ENCODE measurements at regions of chr22 and their contacts with region 1.

Region 1: DNA sequence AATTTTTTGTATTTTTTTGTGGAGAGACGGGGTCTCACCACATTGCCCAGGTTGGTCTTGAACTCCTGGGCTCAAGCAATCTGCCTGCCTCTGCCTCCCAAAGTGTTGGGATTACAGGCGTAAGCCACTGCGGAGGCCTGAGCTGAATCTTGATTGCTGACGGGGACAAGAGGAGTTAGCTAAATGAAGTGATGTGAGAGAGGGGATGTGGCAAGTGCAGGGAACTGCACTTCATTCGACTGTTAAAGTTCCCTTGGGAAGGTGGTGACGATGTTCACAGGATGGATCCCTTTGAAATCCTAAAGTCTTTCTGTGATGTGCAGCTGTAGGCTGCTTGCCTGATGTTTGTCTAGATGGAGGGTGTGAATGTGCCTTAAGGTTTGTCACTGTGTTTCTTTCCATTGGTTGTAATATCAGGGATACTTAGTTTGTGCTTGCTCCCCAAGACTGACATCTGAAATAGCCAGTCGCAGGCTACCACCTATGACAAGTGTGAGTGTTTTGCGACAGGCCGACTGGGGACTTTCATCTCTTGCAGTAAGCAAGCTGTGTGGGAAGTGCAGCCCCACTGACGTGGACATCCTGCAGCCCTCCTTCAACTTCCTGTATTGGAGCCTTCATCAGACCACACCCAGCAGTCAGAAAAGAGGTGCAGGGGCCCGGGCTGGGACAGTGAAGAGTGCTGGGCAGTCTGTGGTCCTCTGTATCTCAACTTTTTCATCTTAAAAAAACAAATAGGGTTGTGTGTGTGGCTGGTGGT is 19.6 kb upstream of the CCDC134 start:
- DNase-seq: peak; percentile 90 to 99 (median 95)
- H3K4me3 ChIP-seq: peak overlapping the region; percentile 88 to 92
- H3K4me3 Mint-ChIP-seq: peak overlapping the region; percentile 88 to 94 (median 90)
- H3K27ac ChIP-seq: peak overlapping the region; percentile 90
- H3K27ac Mint-ChIP-seq: peak overlapping the region; percentile 92 to 100 (median 99)
- H3K4me1 ChIP-seq: peaks cover 50% of the 10 kb centered on the region
- H3K4me1 Mint-ChIP-seq: peaks cover 29 to 53% (median 40%) of the 10 kb centered on the region in 4 donors
- H3K27me3 ChIP-seq: no peaks in the 10 kb centered on the region
- H3K27me3 Mint-ChIP-seq: no peaks in the 10 kb centered on the region

Region 2: GRCh38 chr22:41666661-41667258 is 114.2 kb before region 1 on chr22:
- CTCF ChIA-PET with region 1: interaction called, 12 read pairs
- POLR2A ChIA-PET with region 1: interaction called, 11 read pairs
- intact Hi-C with region 1: no loop called
- DNase-seq: peak; percentile 91 to 97 (median 96)
- H3K4me3 ChIP-seq: peak overlapping the region in 1 of 2 donors; percentile 39
- H3K4me3 Mint-ChIP-seq: peak overlapping the region; percentile 86 to 94 (median 88)
- H3K27ac ChIP-seq: peak overlapping the region; percentile 80
- H3K27ac Mint-ChIP-seq: peak overlapping the region; percentile 97 to 99 (median 98)
- H3K4me1 ChIP-seq: peaks cover 14% of the 10 kb centered on the region
- H3K4me1 Mint-ChIP-seq: peaks cover 4 to 14% (median 11%) of the 10 kb centered on the region in 4 donors
- H3K27me3 ChIP-seq: no peaks in the 10 kb centered on the region
- H3K27me3 Mint-ChIP-seq: no peaks in the 10 kb centered on the region

Region 3: DNA sequence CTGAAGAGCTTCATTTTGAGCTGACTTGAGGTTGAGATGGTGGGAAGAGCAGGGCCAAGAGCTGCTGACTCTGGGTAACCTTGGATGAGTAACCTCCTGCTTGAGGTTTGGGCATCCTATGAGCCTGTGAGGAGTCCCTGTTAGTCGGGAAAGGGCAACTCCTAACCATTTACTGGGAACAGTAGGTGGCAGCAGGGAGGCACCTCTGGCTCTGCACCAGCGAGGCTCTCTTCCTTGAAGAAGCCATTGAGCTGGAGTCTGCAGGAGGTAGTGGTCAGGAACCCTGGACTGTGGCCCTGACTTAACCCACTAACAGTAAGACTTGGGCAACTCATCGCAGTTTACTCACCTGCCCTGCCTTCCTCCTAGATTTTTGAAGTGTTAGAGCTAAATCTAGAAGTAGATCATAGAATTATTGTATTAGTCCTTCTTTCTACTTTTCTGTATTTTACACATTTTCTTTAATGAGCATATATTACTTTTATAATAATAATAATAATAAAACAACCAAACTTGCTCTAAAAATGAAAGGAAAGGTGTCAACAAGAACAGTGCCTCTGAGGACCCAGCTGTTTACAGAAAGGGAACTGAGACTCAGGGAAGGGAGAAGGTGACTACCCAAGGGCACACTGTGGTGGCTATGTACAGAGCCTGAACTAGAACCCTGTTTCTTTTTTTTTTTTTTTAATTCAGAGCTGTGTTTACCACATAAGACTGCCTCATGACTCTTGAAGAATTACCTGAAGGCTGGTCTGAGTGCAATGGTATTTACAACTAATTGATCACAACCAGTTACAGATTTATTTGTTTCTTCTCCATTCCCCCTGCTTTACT is 34.1 kb before region 1 on chr22:
- CTCF ChIA-PET with region 1: interaction called, 46 read pairs
- POLR2A ChIA-PET with region 1: interaction called, 13 read pairs
- intact Hi-C with region 1: loop called (anchors 1 kb)
- DNase-seq: peak; percentile 48 to 66 (median 51)
- H3K4me3 ChIP-seq: no peak overlapping the region
- H3K4me3 Mint-ChIP-seq: no peak overlapping the region
- H3K27ac ChIP-seq: no peak overlapping the region
- H3K27ac Mint-ChIP-seq: peak overlapping the region in 1 of 7 donors; percentile 2
- H3K4me1 ChIP-seq: no peaks in the 10 kb centered on the region
- H3K4me1 Mint-ChIP-seq: peaks cover 0 to 5% (median 1%) of the 10 kb centered on the region in 4 donors
- H3K27me3 ChIP-seq: no peaks in the 10 kb centered on the region
- H3K27me3 Mint-ChIP-seq: peaks cover 0 to 2% of the 10 kb centered on the region in 2 donors

Region 4: GRCh38 chr22:41793871-41794270 is 12.9 kb after region 1 on chr22:
- CTCF ChIA-PET with region 1: interaction called, 71 read pairs
- POLR2A ChIA-PET with region 1: interaction called, 584 read pairs
- intact Hi-C with region 1: no loop called
- DNase-seq: no peak
- H3K4me3 ChIP-seq: no peak overlapping the region
- H3K4me3 Mint-ChIP-seq: no peak overlapping the region
- H3K27ac ChIP-seq: no peak overlapping the region
- H3K27ac Mint-ChIP-seq: peak overlapping the region in 2 of 7 donors; percentile 30 to 80
- H3K4me1 ChIP-seq: peaks cover 4% of the 10 kb centered on the region
- H3K4me1 Mint-ChIP-seq: peaks cover 7 to 13% (median 10%) of the 10 kb centered on the region in 4 donors
- H3K27me3 ChIP-seq: no peaks in the 10 kb centered on the region
- H3K27me3 Mint-ChIP-seq: no peaks in the 10 kb centered on the region

Region 5: GRCh38 chr22:41857155-41857859 is 76.4 kb after region 1 on chr22:
- CTCF ChIA-PET with region 1: interaction called, 11 read pairs
- POLR2A ChIA-PET with region 1: interaction called, 10 read pairs
- intact Hi-C with region 1: no loop called
- DNase-seq: peak; percentile 71 to 89 (median 72)
- H3K4me3 ChIP-seq: no peak overlapping the region
- H3K4me3 Mint-ChIP-seq: peak overlapping the region in 7 of 8 donors; percentile 0 to 64 (median 47)
- H3K27ac ChIP-seq: peak overlapping the region; percentile 40
- H3K27ac Mint-ChIP-seq: peak overlapping the region; percentile 71 to 96 (median 86)
- H3K4me1 ChIP-seq: peaks cover 53% of the 10 kb centered on the region
- H3K4me1 Mint-ChIP-seq: peaks cover 29 to 59% (median 44%) of the 10 kb centered on the region in 4 donors
- H3K27me3 ChIP-seq: no peaks in the 10 kb centered on the region
- H3K27me3 Mint-ChIP-seq: no peaks in the 10 kb centered on the region

Region 6: DNA sequence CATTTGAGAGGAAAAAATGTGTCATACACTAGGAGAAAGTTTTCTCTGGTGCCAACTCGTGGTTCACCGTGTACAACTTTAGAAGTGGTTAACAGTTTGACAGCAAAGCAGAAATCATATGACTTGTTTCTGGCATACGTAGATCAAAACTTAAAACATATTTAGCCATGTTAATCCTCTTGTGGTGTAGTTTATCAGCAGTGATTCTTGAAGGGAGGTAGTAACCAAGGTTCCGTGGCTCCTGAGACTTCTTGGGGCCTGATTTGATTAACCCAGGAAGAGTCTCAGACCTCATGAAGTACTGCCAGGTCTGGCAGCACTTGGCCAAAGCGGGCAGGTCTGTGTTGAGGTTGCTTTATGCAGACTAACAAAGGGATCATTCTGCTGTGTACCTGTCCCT is 92.5 kb after region 1 on chr22:
- CTCF ChIA-PET with region 1: no interaction called
- POLR2A ChIA-PET with region 1: no interaction called
- intact Hi-C with region 1: no loop called
- DNase-seq: peak; percentile 47 to 65 (median 54)
- H3K4me3 ChIP-seq: no peak overlapping the region
- H3K4me3 Mint-ChIP-seq: peak overlapping the region in 5 of 8 donors; percentile 1 to 40 (median 11)
- H3K27ac ChIP-seq: no peak overlapping the region
- H3K27ac Mint-ChIP-seq: peak overlapping the region; percentile 81 to 93 (median 89)
- H3K4me1 ChIP-seq: peaks cover 6% of the 10 kb centered on the region
- H3K4me1 Mint-ChIP-seq: peaks cover 7 to 12% (median 12%) of the 10 kb centered on the region in 4 donors
- H3K27me3 ChIP-seq: no peaks in the 10 kb centered on the region
- H3K27me3 Mint-ChIP-seq: no peaks in the 10 kb centered on the region